ENCODE measurements at regions of chr15 and their contacts with region 1.

Region 1: GRCh38 chr15:70826634-70827033 is 27.3 kb downstream of the LARP6 start:
- DNase-seq: no peak
- H3K4me3 ChIP-seq: no peak overlapping the region
- H3K27ac ChIP-seq: no peak overlapping the region
- H3K4me1 ChIP-seq: no peaks in the 10 kb centered on the region
- H3K27me3 ChIP-seq: no peaks in the 10 kb centered on the region
- CTCF ChIP-seq: no peak
- EP300 ChIP-seq: no peak
- POLR2A ChIP-seq: no peak
- RAD21 ChIP-seq: no peak

Region 2: GRCh38 chr15:70845602-70846360 is 19.1 kb after region 1 on chr15:
- CTCF ChIA-PET with region 1: interaction called, 16 read pairs
- POLR2A ChIA-PET with region 1: interaction called, 3 read pairs
- DNase-seq: no peak
- H3K4me3 ChIP-seq: no peak overlapping the region
- H3K27ac ChIP-seq: no peak overlapping the region
- H3K4me1 ChIP-seq: no peaks in the 10 kb centered on the region
- H3K27me3 ChIP-seq: no peaks in the 10 kb centered on the region
- CTCF ChIP-seq: no peak
- EP300 ChIP-seq: no peak
- POLR2A ChIP-seq: no peak
- RAD21 ChIP-seq: no peak

Region 3: GRCh38 chr15:70853821-70854666 is 27.4 kb after region 1 on chr15 and contains the start of gene LARP6:
- CTCF ChIA-PET with region 1: interaction called, 13 read pairs
- POLR2A ChIA-PET with region 1: interaction called, 7 read pairs
- DNase-seq: peak in 1 of 2 experiments; percentile 85
- H3K4me3 ChIP-seq: peak within 1 kb of the TSS; percentile 70 to 80 (median 73)
- H3K27ac ChIP-seq: no peak within 1 kb of the TSS; the same call in 1 of the 2 replicates
- H3K4me1 ChIP-seq: peaks cover 3 to 8% (median 5%) of the 10 kb centered on the region in 4 experiments; a peak in 4 of 7 replicates
- H3K27me3 ChIP-seq: 0 out of 7 replicates have a peak, but pooled peaks cover 0 to 3% (median 0%) of the 10 kb centered on the region in 4 experiments
- CTCF ChIP-seq: peak in 1 of 3 experiments; percentile 2; a peak in 1 of 4 replicates
- EP300 ChIP-seq: no peak
- POLR2A ChIP-seq: no peak; a peak in 1 of 3 replicates
- RAD21 ChIP-seq: no peak
- total RNA-seq, gene LARP6: 20.2 and 21.0 TPM in 2 replicates

Region 4: GRCh38 chr15:71011503-71012155 is 185.0 kb after region 1 on chr15:
- CTCF ChIA-PET with region 1: no interaction called
- POLR2A ChIA-PET with region 1: no interaction called
- DNase-seq: no peak
- H3K4me3 ChIP-seq: no peak overlapping the region
- H3K27ac ChIP-seq: no peak overlapping the region
- H3K4me1 ChIP-seq: no peaks in the 10 kb centered on the region
- H3K27me3 ChIP-seq: no peaks in the 10 kb centered on the region
- CTCF ChIP-seq: peak in 2 of 3 experiments; percentile 53 to 73; a peak in 2 of 4 replicates
- EP300 ChIP-seq: no peak
- POLR2A ChIP-seq: no peak
- RAD21 ChIP-seq: peak; percentile 87 to 93

Region 5: GRCh38 chr15:71048913-71049675 is 222.5 kb after region 1 on chr15:
- CTCF ChIA-PET with region 1: no interaction called
- POLR2A ChIA-PET with region 1: no interaction called
- DNase-seq: no peak
- H3K4me3 ChIP-seq: no peak overlapping the region
- H3K27ac ChIP-seq: no peak overlapping the region
- H3K4me1 ChIP-seq: peaks cover 0 to 10% (median 1%) of the 10 kb centered on the region in 4 experiments; a peak in 4 of 7 replicates
- H3K27me3 ChIP-seq: no peaks in the 10 kb centered on the region
- CTCF ChIP-seq: no peak
- EP300 ChIP-seq: no peak
- POLR2A ChIP-seq: no peak
- RAD21 ChIP-seq: no peak

Measured in H1 (cell line).